Activated T-helper 1 cell treated with anti-CD3 and anti-CD28 coated beads, Interleukin-12 subunit alpha, Interleukin-12 subunit beta, Interleukin-2, Interleukin-4 antibody, amounts not matched to agents 30 ng/mL and 10 ng/mL and 1 ng/mL, durations not matched to agents 14 hours and 24 hours and 36 hours (primary cell): ENCODE measurements at regions of chr7 and their contacts with region 1.

Region 1: GRCh38 chr7:75878769-75879611 is at the start of gene RHBDD2:
- DNase-seq: peak; percentile 90
- H3K4me3 Mint-ChIP-seq: peak within 1 kb of the TSS; percentile 95
- H3K27ac Mint-ChIP-seq: peak within 1 kb of the TSS; percentile 96
- H3K4me1 Mint-ChIP-seq: peaks cover 45% of the 10 kb centered on the region
- H3K27me3 Mint-ChIP-seq: no peaks in the 10 kb centered on the region
- total RNA-seq, gene RHBDD2: 59.9 and 63.9 TPM in 2 replicates

Region 2: GRCh38 chr7:75738987-75739795 is 139.8 kb before region 1 on chr7:
- intact Hi-C with region 1: loop called (anchors 1 kb)
- DNase-seq: peak; percentile 98
- H3K4me3 Mint-ChIP-seq: peak overlapping the region; percentile 93
- H3K27ac Mint-ChIP-seq: peak overlapping the region; percentile 96
- H3K4me1 Mint-ChIP-seq: peaks cover 21% of the 10 kb centered on the region
- H3K27me3 Mint-ChIP-seq: peaks cover 17% of the 10 kb centered on the region

Region 3: GRCh38 chr7:75866489-75867389 is 12.3 kb before region 1 on chr7:
- intact Hi-C with region 1: loop called (anchors 1 kb)
- DNase-seq: no peak
- H3K4me3 Mint-ChIP-seq: no peak overlapping the region
- H3K27ac Mint-ChIP-seq: no peak overlapping the region
- H3K4me1 Mint-ChIP-seq: peaks cover 24% of the 10 kb centered on the region
- H3K27me3 Mint-ChIP-seq: peaks cover 8% of the 10 kb centered on the region

Region 4: DNA sequence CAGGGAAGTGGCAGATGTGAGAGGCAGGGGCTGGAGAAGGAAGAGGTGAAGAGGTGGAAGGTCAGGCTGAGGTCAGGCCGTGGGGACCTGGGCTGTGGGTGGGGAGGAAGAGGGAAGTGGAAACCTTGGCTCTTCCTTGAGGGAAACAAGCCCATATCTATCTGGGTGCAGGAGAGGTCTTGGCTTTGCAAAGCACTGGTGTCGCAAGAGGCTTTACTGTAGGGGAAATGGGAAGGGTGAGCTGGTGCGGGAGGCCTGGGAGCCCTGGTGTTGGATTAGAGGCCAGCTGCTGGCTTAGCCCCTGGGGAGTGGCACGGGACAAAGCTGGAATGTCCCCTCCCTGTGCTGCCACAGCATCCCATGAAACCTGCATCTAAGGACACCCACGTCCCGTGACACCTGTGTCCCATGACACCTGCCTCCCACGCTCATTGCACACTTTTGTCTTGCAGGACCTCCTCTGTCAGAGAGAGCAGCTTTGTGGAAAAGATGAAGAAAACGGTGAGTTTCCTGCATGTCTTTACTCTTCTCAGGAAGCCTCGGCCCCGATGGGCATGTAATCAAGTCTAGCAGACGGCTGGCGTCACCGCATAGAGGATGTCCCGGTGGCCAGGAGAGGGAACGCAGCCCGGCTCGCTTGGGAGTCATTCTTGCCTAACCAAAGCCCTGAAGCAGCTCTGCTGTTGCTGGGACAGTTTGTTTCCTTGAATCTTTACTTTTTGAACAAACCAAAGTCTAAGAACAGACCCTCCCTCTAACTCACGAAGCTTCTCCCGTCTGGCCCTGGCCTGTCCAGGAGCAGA is 93.2 kb after region 1 on chr7:
- intact Hi-C with region 1: no loop called
- DNase-seq: no peak
- H3K4me3 Mint-ChIP-seq: no peak overlapping the region
- H3K27ac Mint-ChIP-seq: no peak overlapping the region
- H3K4me1 Mint-ChIP-seq: no peaks in the 10 kb centered on the region
- H3K27me3 Mint-ChIP-seq: no peaks in the 10 kb centered on the region

Region 5: GRCh38 chr7:76008156-76008687 is 129.2 kb after region 1 on chr7:
- intact Hi-C with region 1: loop called (anchors 1 kb)
- DNase-seq: peak; percentile 24
- H3K4me3 Mint-ChIP-seq: peak overlapping the region; percentile 52
- H3K27ac Mint-ChIP-seq: peak overlapping the region; percentile 94
- H3K4me1 Mint-ChIP-seq: peaks cover 35% of the 10 kb centered on the region
- H3K27me3 Mint-ChIP-seq: peaks cover 5% of the 10 kb centered on the region

Region 6: DNA sequence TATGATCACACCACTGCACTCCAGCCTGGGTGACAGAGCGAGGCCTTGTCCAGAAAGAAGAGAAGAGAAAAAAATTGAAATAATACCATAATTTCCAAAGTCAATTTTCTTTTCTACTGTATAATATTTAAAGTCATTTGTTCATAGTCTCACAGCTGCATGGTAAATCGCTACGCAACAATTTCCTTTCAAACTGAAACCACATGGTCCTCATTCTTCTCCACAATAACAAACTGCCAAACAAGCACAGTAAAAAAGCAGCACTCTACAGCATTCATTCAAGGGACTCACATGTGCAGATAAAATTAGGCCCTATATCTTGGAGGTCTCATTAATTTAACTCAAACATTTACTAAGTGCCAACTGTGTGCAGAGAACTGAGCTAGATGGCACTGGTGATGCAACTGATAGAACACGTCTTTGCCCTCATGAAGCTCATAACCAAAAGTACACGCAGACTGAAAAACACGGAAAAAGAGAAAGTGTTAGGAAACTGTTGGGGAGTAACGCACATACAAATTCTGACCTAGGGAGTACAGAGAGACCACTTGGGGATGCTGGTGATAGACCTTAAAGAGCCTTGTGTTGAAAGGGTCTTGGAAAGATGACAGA is 254.3 kb after region 1 on chr7:
- intact Hi-C with region 1: loop called (anchors 10 kb)
- DNase-seq: no peak
- H3K4me3 Mint-ChIP-seq: peak overlapping the region; percentile 63
- H3K27ac Mint-ChIP-seq: peak overlapping the region; percentile 79
- H3K4me1 Mint-ChIP-seq: peaks cover 37% of the 10 kb centered on the region
- H3K27me3 Mint-ChIP-seq: peaks cover 2% of the 10 kb centered on the region